Left lung (tissue), 14 donors: ENCODE measurements at regions of chr2 and their contacts with region 1.

Region 1: DNA sequence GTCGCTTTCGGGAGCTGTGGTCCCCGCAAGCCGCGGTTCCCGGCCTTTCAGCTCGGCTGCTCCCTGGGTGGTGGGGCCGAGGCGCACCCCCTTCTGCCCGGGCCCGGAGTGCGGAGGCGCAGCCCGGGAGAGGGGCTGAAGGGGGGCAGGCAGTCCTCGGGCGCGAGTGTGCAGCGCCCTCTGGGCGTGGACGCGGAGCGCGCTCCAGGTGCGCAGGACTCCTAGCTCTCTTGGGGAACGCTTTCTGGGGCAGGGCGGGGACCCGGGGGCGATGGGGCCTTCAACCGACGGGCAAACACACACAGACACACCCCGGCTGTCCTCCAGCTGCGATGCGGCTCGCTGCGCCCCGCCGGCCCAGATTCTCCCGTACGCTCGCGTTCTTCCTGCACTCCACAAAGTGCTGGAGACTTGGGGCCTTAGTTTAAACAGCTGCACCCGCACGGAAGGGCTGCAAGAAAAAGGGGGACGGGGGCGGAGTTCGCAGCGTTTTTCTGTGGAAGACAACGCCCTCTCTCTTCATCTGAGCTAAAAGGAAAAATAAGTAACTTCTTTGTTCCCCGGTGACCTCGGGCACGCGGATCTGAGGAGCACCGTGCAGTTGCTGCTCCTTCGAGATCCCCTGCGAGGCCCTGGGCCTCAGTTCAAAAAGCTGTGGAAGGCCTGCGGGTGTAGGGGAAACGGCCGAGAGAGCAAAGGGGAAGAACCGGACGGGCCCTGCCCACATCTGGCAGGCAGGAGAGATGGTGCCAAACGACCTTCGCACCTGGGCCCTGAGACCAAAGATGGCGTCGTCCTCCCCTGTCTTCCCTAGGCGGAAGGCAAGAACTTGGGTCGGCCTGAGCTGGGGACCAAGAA is 593 bp upstream of the SDC1 start:
- DNase-seq: peak; percentile 72 to 91 (median 85)
- ATAC-seq: peak; percentile 89
- H3K4me3 ChIP-seq: peak overlapping the region; percentile 50 to 56
- H3K27ac ChIP-seq: peak overlapping the region; percentile 70 to 75
- H3K4me1 ChIP-seq: peaks cover 8 to 27% of the 10 kb centered on the region in 2 donors
- H3K27me3 ChIP-seq: peaks cover 7 to 76% of the 10 kb centered on the region in 2 donors
- CTCF ChIP-seq: peak; percentile 13 to 38

Region 2: GRCh38 chr2:20135631-20136050 is 89.9 kb before region 1 on chr2:
- intact Hi-C with region 1: loop called in 1 of 2 experiments (anchors 10 kb)
- DNase-seq: peak in 3 of 4 donors; percentile 61 to 82 (median 68)
- ATAC-seq: peak; percentile 90
- H3K4me3 ChIP-seq: no peak overlapping the region
- H3K27ac ChIP-seq: no peak overlapping the region
- H3K4me1 ChIP-seq: no peaks in the 10 kb centered on the region
- H3K27me3 ChIP-seq: no peaks in the 10 kb centered on the region
- CTCF ChIP-seq: peak; percentile 65 to 66

Region 3: GRCh38 chr2:20333738-20334137 is 108.2 kb after region 1 on chr2:
- intact Hi-C with region 1: no loop called
- DNase-seq: no peak
- ATAC-seq: no peak
- H3K4me3 ChIP-seq: no peak overlapping the region
- H3K27ac ChIP-seq: no peak overlapping the region
- H3K4me1 ChIP-seq: peaks cover 13 to 37% of the 10 kb centered on the region in 2 donors
- H3K27me3 ChIP-seq: no peaks in the 10 kb centered on the region
- CTCF ChIP-seq: no peak